Colonic mucosa (tissue), 4 donors: ENCODE measurements at regions of chr12 and their contacts with region 1.

Region 1: GRCh38 chr12:111942557-111942956 is 70.4 kb downstream of the TMEM116 start:
- DNase-seq: peak; percentile 34
- H3K4me3 ChIP-seq: no peak overlapping the region
- H3K27ac ChIP-seq: no peak overlapping the region
- H3K4me1 ChIP-seq: no peaks in the 10 kb centered on the region
- H3K27me3 ChIP-seq: no peaks in the 10 kb centered on the region
- CTCF ChIP-seq: no peak

Region 2: GRCh38 chr12:112018571-112019237 is 76.1 kb after region 1 on chr12:
- intact Hi-C with region 1: loop called (anchors 5 kb)
- DNase-seq: no peak
- H3K4me3 ChIP-seq: no peak overlapping the region
- H3K27ac ChIP-seq: no peak overlapping the region
- H3K4me1 ChIP-seq: peaks cover 8% of the 10 kb centered on the region
- H3K27me3 ChIP-seq: no peaks in the 10 kb centered on the region
- CTCF ChIP-seq: no peak